Calu3 (cell line): ENCODE measurements at regions of chr12 and their contacts with region 1.

Region 1: DNA sequence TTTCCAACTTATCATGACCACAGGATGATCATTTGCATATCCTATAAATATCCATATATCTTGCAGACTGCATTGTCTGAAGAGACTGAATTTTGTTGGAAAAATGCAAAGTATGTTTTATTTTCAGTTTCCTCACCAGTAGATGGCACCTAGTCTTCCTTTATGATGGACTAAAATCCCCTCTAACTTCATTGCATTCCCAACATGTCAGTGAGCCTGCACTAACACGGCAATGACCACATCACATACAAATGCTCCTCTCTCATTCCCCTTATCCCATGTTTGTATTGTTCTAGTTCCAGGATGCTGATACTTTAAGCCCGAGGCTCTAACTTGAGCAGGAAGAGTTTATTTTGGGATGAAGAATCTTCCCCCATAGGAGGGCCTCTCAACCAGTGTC is 24.7 kb upstream of the MYBPC1 start:
- DNase-seq: peak; percentile 14
- H3K4me3 Mint-ChIP-seq: no peak overlapping the region
- H3K27ac Mint-ChIP-seq: no peak overlapping the region
- H3K4me1 Mint-ChIP-seq: peaks cover 17% of the 10 kb centered on the region
- H3K27me3 Mint-ChIP-seq: no peaks in the 10 kb centered on the region
- CTCF ChIP-seq: peak; percentile 41

Region 2: GRCh38 chr12:101607902-101608742 is 38.1 kb after region 1 on chr12:
- CTCF ChIA-PET with region 1: no interaction called
- intact Hi-C with region 1: loop called (anchors 1 kb)
- DNase-seq: peak; percentile 80
- H3K4me3 Mint-ChIP-seq: peak overlapping the region; percentile 48
- H3K27ac Mint-ChIP-seq: peak overlapping the region; percentile 86
- H3K4me1 Mint-ChIP-seq: peaks cover 39% of the 10 kb centered on the region
- H3K27me3 Mint-ChIP-seq: no peaks in the 10 kb centered on the region
- CTCF ChIP-seq: no peak

Region 3: GRCh38 chr12:101616027-101616494 is 46.0 kb after region 1 on chr12:
- CTCF ChIA-PET with region 1: no interaction called
- intact Hi-C with region 1: loop called (anchors 5 kb)
- DNase-seq: peak; percentile 61
- H3K4me3 Mint-ChIP-seq: peak overlapping the region; percentile 55
- H3K27ac Mint-ChIP-seq: peak overlapping the region; percentile 79
- H3K4me1 Mint-ChIP-seq: peaks cover 53% of the 10 kb centered on the region
- H3K27me3 Mint-ChIP-seq: no peaks in the 10 kb centered on the region
- CTCF ChIP-seq: no peak

Region 4: DNA sequence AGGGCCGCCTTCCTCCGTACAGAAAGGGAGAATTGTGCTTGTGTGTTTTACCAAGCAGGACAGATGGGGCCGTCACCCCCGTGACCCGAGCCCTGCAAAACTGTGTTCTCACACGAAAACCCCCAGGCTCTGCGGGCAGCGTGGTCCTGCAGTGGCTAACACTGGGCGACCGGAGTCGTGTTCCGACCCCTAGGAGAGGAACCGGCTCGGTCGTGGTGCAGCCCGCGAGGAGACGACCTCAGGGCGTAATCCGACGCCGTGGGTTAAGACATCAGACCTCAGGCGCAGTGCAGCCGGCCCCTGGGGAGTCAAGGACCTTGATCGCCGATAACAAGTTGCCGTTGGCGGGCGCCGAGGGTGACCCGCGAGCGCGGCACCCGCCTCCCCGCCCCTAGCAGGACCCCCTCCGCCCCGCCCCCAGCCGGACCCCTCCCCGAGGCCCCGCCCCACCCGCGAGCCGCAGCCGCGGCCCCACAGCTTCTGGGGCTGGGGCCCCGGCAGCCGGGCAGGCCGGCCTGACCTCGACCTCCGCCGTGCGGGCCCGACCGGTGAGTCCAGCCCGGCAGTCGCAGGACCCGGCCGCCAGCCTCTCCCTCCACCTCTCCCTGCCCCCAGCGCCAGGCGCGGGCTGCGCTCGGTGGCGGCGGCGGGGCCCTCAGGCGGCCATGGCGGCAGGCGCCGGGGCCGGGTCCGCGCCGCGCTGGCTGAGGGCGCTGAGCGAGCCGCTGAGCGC is 127.3 kb after region 1 on chr12 and contains the start of gene CHPT1:
- CTCF ChIA-PET with region 1: no interaction called
- intact Hi-C with region 1: loop called (anchors 1 kb)
- DNase-seq: peak; percentile 66
- H3K4me3 Mint-ChIP-seq: peak within 1 kb of the TSS; percentile 92
- H3K27ac Mint-ChIP-seq: peak within 1 kb of the TSS; percentile 78
- H3K4me1 Mint-ChIP-seq: peaks cover 46% of the 10 kb centered on the region
- H3K27me3 Mint-ChIP-seq: no peaks in the 10 kb centered on the region
- CTCF ChIP-seq: no peak
- total RNA-seq, gene CHPT1: 45.5 and 49.2 TPM in 2 replicates

Region 5: DNA sequence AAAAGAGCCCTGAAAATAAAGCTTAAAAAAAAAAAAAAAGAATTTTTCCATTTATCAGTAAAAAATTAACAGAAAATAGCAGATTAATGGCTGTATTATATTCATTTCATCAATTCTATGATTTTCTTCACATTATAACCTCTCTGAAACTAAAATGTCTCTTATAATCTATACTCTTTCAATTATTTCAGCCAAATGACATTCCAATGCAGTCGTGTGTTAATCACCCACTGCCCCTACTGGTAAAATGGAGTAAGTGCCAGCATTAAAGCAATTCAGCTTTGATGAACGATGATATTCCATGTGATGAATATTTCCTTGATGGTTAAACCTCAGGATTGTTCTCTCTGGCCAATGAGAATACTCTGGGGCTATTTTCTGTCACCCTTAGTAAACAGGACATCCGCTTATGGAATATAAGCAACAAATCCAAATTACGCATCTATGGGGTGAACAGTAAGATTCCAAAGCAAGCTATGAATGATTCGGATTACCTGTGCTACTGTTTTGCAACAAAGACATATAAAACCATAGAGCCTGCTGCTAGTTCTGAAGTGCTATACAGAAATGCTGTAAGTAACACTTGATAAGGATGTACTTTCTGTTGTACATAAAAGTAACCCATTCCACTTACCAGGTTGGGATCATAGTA is 189.5 kb after region 1 on chr12:
- CTCF ChIA-PET with region 1: interaction called, 3 read pairs
- intact Hi-C with region 1: loop called (anchors 1 kb)
- DNase-seq: peak; percentile 24
- H3K4me3 Mint-ChIP-seq: no peak overlapping the region
- H3K27ac Mint-ChIP-seq: no peak overlapping the region
- H3K4me1 Mint-ChIP-seq: peaks cover 6% of the 10 kb centered on the region
- H3K27me3 Mint-ChIP-seq: no peaks in the 10 kb centered on the region
- CTCF ChIP-seq: peak; percentile 46

Region 6: GRCh38 chr12:101830367-101831325 is 260.6 kb after region 1 on chr12 and contains the start of gene GNPTAB:
- CTCF ChIA-PET with region 1: no interaction called
- intact Hi-C with region 1: loop called (anchors 10 kb)
- DNase-seq: peak; percentile 97
- H3K4me3 Mint-ChIP-seq: peak within 1 kb of the TSS; percentile 92
- H3K27ac Mint-ChIP-seq: peak within 1 kb of the TSS; percentile 73
- H3K4me1 Mint-ChIP-seq: peaks cover 8% of the 10 kb centered on the region
- H3K27me3 Mint-ChIP-seq: no peaks in the 10 kb centered on the region
- CTCF ChIP-seq: no peak
- total RNA-seq, gene GNPTAB: 34.0 and 36.0 TPM in 2 replicates